A673 (cell line): ENCODE measurements at regions of chr9 and their contacts with region 1.

Region 1: GRCh38 chr9:89310475-89311346 is at the start of gene CKS2:
- DNase-seq: peak; percentile 100
- H3K4me3 ChIP-seq: peak within 1 kb of the TSS; percentile 81
- H3K27ac ChIP-seq: peak within 1 kb of the TSS; percentile 99
- H3K4me1 ChIP-seq: peaks cover 17% of the 10 kb centered on the region
- H3K27me3 ChIP-seq: no peaks in the 10 kb centered on the region
- CTCF ChIP-seq: no peak
- total RNA-seq, gene CKS2: 301 and 344 TPM in 2 replicates

Region 2: GRCh38 chr9:89096807-89097206 is 213.9 kb before region 1 on chr9:
- CTCF ChIA-PET with region 1: no interaction called
- POLR2A ChIA-PET with region 1: interaction called, 11 read pairs
- intact Hi-C with region 1: no loop called
- DNase-seq: no peak
- H3K4me3 ChIP-seq: no peak overlapping the region
- H3K27ac ChIP-seq: no peak overlapping the region
- H3K4me1 ChIP-seq: no peaks in the 10 kb centered on the region
- H3K27me3 ChIP-seq: no peaks in the 10 kb centered on the region
- CTCF ChIP-seq: peak; percentile 40

Region 3: GRCh38 chr9:89179895-89180667 is 130.6 kb before region 1 on chr9:
- CTCF ChIA-PET with region 1: no interaction called
- POLR2A ChIA-PET with region 1: no interaction called
- intact Hi-C with region 1: loop called (anchors 2 kb)
- DNase-seq: peak; percentile 97
- H3K4me3 ChIP-seq: peak overlapping the region; percentile 54
- H3K27ac ChIP-seq: peak overlapping the region; percentile 83
- H3K4me1 ChIP-seq: peaks cover 27% of the 10 kb centered on the region
- H3K27me3 ChIP-seq: peaks cover 5% of the 10 kb centered on the region
- CTCF ChIP-seq: no peak

Region 4: DNA sequence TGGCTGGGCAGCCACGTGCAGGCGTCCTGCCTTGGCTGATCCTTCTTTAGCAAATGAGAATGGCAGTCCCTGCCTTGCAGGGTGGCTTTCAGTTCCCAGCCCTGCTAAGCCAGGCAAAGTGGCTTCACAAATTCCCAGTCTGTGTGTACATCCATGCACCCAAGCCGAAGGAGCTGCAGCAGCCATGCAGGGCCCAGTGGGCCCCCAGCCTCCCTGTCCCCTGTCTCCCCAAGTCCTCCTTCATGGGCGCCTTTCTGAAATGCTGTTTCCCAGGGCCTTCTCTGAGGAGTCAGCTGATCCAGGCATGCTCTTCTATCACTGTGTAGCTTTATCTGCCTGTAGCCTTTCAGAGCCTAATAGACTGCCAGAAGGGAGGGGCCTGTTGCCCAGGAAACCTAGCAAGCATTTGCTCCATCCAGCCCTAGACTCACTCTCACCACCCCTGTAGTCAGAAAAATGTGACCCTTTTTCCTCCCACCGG is 84.7 kb before region 1 on chr9:
- CTCF ChIA-PET with region 1: no interaction called
- POLR2A ChIA-PET with region 1: no interaction called
- intact Hi-C with region 1: no loop called
- DNase-seq: no peak
- H3K4me3 ChIP-seq: no peak overlapping the region
- H3K27ac ChIP-seq: no peak overlapping the region
- H3K4me1 ChIP-seq: no peaks in the 10 kb centered on the region
- H3K27me3 ChIP-seq: no peaks in the 10 kb centered on the region
- CTCF ChIP-seq: no peak

Region 5: DNA sequence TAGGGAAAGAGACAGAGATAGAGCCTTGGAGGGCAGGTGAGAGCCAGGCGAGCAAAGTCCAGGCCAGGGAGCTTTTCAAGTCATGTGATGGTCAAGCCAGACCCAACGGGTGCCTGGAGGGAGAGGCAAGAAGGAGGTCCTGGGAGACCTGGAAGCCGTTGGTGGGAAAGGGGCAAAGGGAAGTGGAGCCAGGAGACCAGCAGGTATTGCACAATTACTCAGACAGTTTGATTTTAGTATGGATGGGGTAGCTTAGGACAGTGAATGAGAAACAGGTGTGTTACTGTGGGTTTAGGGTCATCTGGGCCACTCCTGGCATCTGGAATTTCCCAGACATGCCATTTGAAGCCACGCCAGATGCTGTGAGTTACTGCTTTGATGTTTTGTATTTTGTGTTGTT is 12.7 kb after region 1 on chr9:
- CTCF ChIA-PET with region 1: no interaction called
- POLR2A ChIA-PET with region 1: no interaction called
- intact Hi-C with region 1: no loop called
- DNase-seq: no peak
- H3K4me3 ChIP-seq: no peak overlapping the region
- H3K27ac ChIP-seq: no peak overlapping the region
- H3K4me1 ChIP-seq: peaks cover 11% of the 10 kb centered on the region
- H3K27me3 ChIP-seq: no peaks in the 10 kb centered on the region
- CTCF ChIP-seq: no peak